Endothelial cell of umbilical vein (primary cell): ENCODE measurements at regions of chr11 and their contacts with region 1.

Region 1: GRCh38 chr11:59171508-59172322 is at the start of gene DTX4:
- DNase-seq: peak; percentile 87
- H3K4me3 ChIP-seq: peak within 1 kb of the TSS in 2 of 3 experiments; percentile 35 to 36
- H3K27ac ChIP-seq: no peak within 1 kb of the TSS
- H3K4me1 ChIP-seq: peaks cover 8% of the 10 kb centered on the region
- H3K27me3 ChIP-seq: peaks cover 37 to 42% of the 10 kb centered on the region in 2 experiments
- CTCF ChIP-seq: peak; percentile 92 to 96
- POLR2A ChIP-seq: no peak
- total RNA-seq, gene DTX4: 0.51 and 0.91 TPM in 2 replicates

Region 2: DNA sequence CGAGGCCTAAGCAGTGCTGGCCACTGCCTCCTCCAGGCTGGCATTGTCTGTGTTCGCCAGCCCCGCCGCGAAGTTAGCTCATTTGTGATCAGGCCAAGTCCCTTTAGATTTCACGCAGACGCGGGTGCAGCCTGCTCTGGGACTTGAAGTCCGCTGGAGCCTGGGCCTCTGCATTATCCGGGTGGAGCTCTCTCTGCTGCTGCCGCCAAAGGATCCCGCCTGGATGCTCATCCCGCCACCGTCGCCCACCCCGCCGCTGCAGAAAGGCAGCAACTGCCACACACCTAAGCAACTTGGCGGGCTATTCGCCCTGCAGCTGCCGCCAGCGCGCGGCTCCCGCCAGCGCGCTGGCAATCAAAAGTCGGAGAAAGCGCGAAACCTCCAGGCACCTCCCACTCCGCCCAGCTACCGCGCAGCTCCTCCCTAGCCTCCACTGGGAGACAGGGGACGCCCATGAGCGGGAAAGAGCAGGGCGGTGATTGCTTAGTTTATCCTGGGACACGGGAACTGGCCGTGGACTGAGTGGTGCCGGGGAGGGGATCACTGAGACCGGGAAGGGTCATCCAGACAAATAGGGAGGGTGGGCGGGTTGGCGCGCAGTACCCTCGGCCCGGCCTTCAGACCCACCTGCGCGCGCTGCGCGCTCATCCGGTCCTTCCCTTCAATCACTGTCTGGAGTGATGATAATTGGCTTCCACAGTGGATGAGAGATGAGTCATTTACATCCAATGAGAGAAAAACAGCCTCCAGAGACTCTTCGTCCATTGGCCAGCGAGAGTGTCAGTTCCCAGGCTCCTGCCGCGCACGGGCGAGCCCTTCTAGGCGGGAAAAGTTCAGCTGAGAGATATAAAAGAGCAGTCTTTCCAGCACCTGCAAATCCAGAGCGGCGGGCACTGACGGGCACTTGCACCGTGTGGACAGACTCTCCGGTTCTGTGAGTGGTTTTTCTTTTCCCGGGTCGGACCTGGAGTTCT is 65.1 kb before region 1 on chr11 and contains the start of gene FAM111B:
- CTCF ChIA-PET with region 1: interaction called, 15 read pairs
- POLR2A ChIA-PET with region 1: no interaction called
- dilution Hi-C with region 1: no loop called
- intact Hi-C with region 1: no loop called
- DNase-seq: peak; percentile 91
- H3K4me3 ChIP-seq: peak within 1 kb of the TSS; percentile 44 to 74 (median 56)
- H3K27ac ChIP-seq: peak within 1 kb of the TSS; percentile 39
- H3K4me1 ChIP-seq: peaks cover 20% of the 10 kb centered on the region
- H3K27me3 ChIP-seq: peaks cover 0 to 3% of the 10 kb centered on the region in 2 experiments
- CTCF ChIP-seq: no peak
- POLR2A ChIP-seq: peak; percentile 29
- total RNA-seq, gene FAM111B: 17.4 and 21.9 TPM in 2 replicates

Region 3: DNA sequence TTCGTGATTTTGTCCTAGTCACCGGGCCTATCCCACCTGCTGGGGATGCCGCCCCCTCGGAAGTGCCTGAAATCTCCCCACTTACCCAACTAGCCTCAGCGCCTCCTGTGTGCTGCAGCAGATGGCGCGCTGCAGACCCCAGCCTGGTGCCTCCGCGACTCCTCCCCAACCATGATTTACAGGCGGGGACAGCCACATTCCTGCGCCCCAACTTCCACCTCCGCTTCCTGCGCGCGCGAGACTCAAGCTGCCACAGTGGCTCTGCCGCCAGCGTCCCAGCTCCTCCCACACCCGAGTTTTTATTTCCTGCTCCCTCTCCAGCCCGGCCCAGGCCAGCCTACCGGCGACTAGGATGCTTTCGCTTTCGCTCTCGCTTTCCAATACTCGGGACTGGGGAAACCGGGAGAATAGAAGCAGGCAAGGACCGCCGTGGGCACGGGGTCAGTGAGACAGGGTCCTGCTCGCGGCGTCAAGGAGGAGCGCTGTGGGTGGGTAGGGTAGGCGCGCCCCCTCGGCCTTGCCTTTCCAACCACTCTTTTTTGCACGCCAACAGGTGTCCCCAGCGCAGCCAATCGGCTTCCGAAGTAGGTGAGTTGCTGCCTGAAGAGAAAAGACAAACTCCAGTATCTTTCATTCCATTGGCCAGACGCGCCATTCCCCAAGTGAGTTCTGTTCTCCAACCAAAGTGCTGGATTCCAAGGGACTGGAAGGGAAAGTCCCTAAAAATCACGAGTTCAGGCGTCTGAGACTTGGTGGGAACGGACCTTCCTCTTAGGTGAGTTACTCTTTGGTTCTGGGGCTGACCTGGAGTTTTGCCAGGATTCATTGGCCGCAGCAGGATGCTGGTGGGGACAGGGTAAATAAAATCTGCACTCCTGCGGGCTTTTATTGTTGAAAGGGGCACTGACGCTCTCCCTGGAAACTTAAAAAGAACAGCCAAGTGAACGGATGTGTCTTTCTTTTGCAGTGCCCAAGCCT is 28.9 kb before region 1 on chr11 and contains the start of gene FAM111A:
- CTCF ChIA-PET with region 1: interaction called, 19 read pairs
- POLR2A ChIA-PET with region 1: no interaction called
- dilution Hi-C with region 1: no loop called
- intact Hi-C with region 1: no loop called
- DNase-seq: peak; percentile 91
- H3K4me3 ChIP-seq: peak within 1 kb of the TSS; percentile 69 to 90 (median 74)
- H3K27ac ChIP-seq: peak within 1 kb of the TSS; percentile 74
- H3K4me1 ChIP-seq: peaks cover 32% of the 10 kb centered on the region
- H3K27me3 ChIP-seq: no peaks in the 10 kb centered on the region
- CTCF ChIP-seq: peak; percentile 17 to 47
- POLR2A ChIP-seq: peak; percentile 66
- total RNA-seq, gene FAM111A: 53.0 and 57.4 TPM in 2 replicates

Region 4: GRCh38 chr11:59186130-59186594 is 14.4 kb after region 1 on chr11:
- CTCF ChIA-PET with region 1: interaction called, 74 read pairs
- POLR2A ChIA-PET with region 1: no interaction called
- dilution Hi-C with region 1: no loop called
- intact Hi-C with region 1: loop called (anchors 1 kb)
- DNase-seq: peak; percentile 3
- H3K4me3 ChIP-seq: no peak overlapping the region
- H3K27ac ChIP-seq: no peak overlapping the region
- H3K4me1 ChIP-seq: peaks cover 2% of the 10 kb centered on the region
- H3K27me3 ChIP-seq: peaks cover 4 to 11% of the 10 kb centered on the region in 2 experiments
- CTCF ChIP-seq: peak; percentile 50 to 62
- POLR2A ChIP-seq: no peak

Region 5: GRCh38 chr11:59207988-59208451 is 36.3 kb after region 1 on chr11:
- CTCF ChIA-PET with region 1: interaction called, 143 read pairs
- POLR2A ChIA-PET with region 1: no interaction called
- dilution Hi-C with region 1: no loop called
- intact Hi-C with region 1: loop called (anchors 1 kb)
- DNase-seq: peak; percentile 41
- H3K4me3 ChIP-seq: no peak overlapping the region
- H3K27ac ChIP-seq: no peak overlapping the region
- H3K4me1 ChIP-seq: no peaks in the 10 kb centered on the region
- H3K27me3 ChIP-seq: no peaks in the 10 kb centered on the region
- CTCF ChIP-seq: peak; percentile 57 to 68
- POLR2A ChIP-seq: no peak

Region 6: DNA sequence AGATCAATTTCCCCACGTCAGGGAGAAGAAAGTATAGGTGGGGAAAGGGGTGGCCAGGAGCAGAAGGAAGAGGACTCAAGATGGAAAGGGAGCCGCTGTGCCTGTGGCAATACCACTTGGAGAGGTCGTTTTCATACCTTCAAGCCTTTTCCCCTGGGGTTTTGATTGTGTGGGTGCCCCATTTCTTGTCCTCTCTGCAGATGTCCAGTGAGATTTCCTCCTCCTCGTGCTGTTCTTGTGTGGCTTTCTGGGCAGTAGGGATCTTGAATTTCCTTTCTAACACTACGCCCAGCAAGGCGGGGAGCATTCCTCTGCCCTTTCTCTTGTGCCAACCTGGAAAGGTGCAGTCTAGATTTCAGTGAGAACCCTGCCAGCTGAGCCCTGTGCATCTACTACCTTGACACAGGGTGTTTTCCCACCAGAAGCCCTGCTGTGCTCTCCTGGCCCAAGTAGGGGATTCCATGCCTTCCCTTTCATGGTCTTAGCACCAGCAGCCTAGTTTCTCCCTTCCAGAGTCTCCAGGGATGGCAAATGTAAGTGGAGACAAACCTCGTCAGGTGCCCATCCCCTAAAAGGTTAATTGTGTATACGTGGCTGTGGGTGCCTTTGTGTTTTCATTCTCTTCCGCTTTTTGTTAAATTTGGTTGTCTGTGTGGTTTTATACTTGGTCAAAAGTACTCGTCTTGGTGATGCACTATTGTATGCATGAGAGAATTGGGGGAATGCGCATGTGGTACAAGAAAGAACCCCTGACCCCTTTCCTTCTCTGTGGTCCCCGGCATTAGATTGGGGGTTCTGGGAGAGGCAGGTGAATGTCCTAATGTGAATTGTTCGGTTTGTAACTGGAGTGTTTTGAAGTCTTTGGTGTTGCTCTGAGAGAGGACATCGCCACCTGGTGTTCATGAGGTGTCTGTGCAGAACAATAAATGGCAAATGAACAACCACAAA is 112.4 kb after region 1 on chr11:
- CTCF ChIA-PET with region 1: interaction called, 18 read pairs
- POLR2A ChIA-PET with region 1: no interaction called
- dilution Hi-C with region 1: no loop called
- intact Hi-C with region 1: no loop called
- DNase-seq: peak; percentile 38
- H3K4me3 ChIP-seq: no peak overlapping the region
- H3K27ac ChIP-seq: no peak overlapping the region
- H3K4me1 ChIP-seq: no peaks in the 10 kb centered on the region
- H3K27me3 ChIP-seq: no peaks in the 10 kb centered on the region
- CTCF ChIP-seq: peak; percentile 72 to 81
- POLR2A ChIP-seq: no peak

Region 7: GRCh38 chr11:59335001-59335400 is 163.3 kb after region 1 on chr11:
- CTCF ChIA-PET with region 1: no interaction called
- POLR2A ChIA-PET with region 1: no interaction called
- dilution Hi-C with region 1: no loop called
- intact Hi-C with region 1: no loop called
- DNase-seq: no peak
- H3K4me3 ChIP-seq: no peak overlapping the region
- H3K27ac ChIP-seq: no peak overlapping the region
- H3K4me1 ChIP-seq: no peaks in the 10 kb centered on the region
- H3K27me3 ChIP-seq: no peaks in the 10 kb centered on the region
- CTCF ChIP-seq: no peak
- POLR2A ChIP-seq: no peak

Region 8: GRCh38 chr11:59680287-59681154 is 508.8 kb after region 1 on chr11:
- CTCF ChIA-PET with region 1: interaction called, 7 read pairs
- POLR2A ChIA-PET with region 1: no interaction called
- dilution Hi-C with region 1: no loop called
- intact Hi-C with region 1: loop called (anchors 1 kb)
- DNase-seq: peak; percentile 81
- H3K4me3 ChIP-seq: no peak overlapping the region
- H3K27ac ChIP-seq: no peak overlapping the region
- H3K4me1 ChIP-seq: no peaks in the 10 kb centered on the region
- H3K27me3 ChIP-seq: peaks cover 2% of the 10 kb centered on the region in 2 experiments
- CTCF ChIP-seq: peak; percentile 76 to 78
- POLR2A ChIP-seq: no peak